ENCODE measurements at regions of chr2 and their contacts with region 1.

Region 1: DNA sequence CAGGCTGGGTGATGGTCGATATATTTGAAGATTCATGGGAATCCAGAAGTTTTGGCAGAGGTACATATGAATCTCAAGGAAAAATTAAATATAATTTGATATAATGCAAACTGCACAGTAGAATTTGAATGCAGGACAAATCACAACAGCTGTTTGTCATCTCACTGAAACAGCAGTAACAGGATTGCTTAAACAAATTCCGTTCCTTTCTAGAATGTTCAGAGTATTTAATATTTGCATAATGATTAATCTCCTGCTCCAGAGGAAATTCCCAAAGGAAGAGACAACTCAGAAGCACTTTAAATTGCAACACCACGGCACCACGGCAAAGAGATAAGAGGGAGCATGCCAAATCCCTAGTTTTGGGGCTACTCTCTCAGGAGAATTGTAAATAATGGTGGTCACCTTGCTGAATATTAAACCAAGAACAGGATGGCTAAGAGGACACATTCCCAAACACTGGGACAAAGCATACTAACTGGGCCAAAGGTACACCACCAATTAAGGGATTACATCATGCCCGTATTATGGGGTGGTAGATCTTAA is 67.8 kb upstream of the MAP4K3 start:
- DNase-seq: no peak
- ATAC-seq: peak; percentile 31 to 58 (median 54)
- H3K4me3 ChIP-seq: peak overlapping the region in 3 of 12 donors; percentile 1 to 13 (median 1)
- H3K27ac ChIP-seq: peak overlapping the region; percentile 31 to 84 (median 72)
- H3K4me1 ChIP-seq: peaks cover 2 to 73% (median 41%) of the 10 kb centered on the region in 12 donors
- H3K27me3 ChIP-seq: no peaks in the 10 kb centered on the region
- CTCF ChIP-seq: no peak
- POLR2A ChIP-seq: no peak

Region 2: GRCh38 chr2:39443009-39443408 is 61.9 kb before region 1 on chr2:
- intact Hi-C with region 1: loop called in 6 of 10 experiments (anchors 5 kb)
- DNase-seq: no peak
- ATAC-seq: no peak
- H3K4me3 ChIP-seq: no peak overlapping the region
- H3K27ac ChIP-seq: no peak overlapping the region
- H3K4me1 ChIP-seq: peaks cover 0 to 23% (median 18%) of the 10 kb centered on the region in 12 donors
- H3K27me3 ChIP-seq: no peaks in the 10 kb centered on the region
- CTCF ChIP-seq: no peak
- POLR2A ChIP-seq: no peak

Region 3: DNA sequence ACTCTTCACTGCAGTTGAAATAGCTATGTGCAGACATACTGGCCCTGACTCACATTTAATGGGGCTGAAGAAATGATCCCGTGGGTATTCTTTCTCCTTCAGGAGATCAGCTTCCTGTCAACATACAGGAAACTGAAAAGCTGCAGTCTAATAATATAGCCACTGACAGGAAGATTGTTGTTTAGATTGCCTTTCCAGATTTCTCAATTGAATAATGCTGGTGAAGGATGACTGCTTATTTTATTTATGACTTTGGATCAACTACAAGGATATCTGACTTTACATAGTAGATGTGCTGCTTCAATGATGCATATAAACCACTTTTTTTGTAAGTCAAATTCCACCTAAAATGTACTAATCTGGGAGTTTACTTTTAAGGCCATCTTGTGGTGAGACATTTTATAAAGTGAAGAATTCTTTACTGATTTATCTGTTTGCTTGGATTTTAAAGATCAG is 25.6 kb after region 1 on chr2:
- intact Hi-C with region 1: no loop called
- DNase-seq: no peak
- ATAC-seq: peak in 2 of 4 donors; percentile 36 to 68
- H3K4me3 ChIP-seq: no peak overlapping the region
- H3K27ac ChIP-seq: peak overlapping the region in 5 of 12 donors; percentile 4 to 47 (median 34)
- H3K4me1 ChIP-seq: peaks cover 4 to 34% (median 18%) of the 10 kb centered on the region in 12 donors
- H3K27me3 ChIP-seq: no peaks in the 10 kb centered on the region
- CTCF ChIP-seq: peak in 1 of 12 donors; percentile 18
- POLR2A ChIP-seq: no peak

Region 4: GRCh38 chr2:39547811-39548719 is 43.2 kb after region 1 on chr2:
- intact Hi-C with region 1: no loop called
- DNase-seq: no peak
- ATAC-seq: no peak
- H3K4me3 ChIP-seq: no peak overlapping the region
- H3K27ac ChIP-seq: no peak overlapping the region
- H3K4me1 ChIP-seq: peaks cover 0 to 12% (median 6%) of the 10 kb centered on the region in 12 donors
- H3K27me3 ChIP-seq: no peaks in the 10 kb centered on the region
- CTCF ChIP-seq: no peak
- POLR2A ChIP-seq: no peak

Region 5: GRCh38 chr2:39719317-39719716 is 214.5 kb after region 1 on chr2:
- intact Hi-C with region 1: no loop called
- DNase-seq: no peak
- ATAC-seq: no peak
- H3K4me3 ChIP-seq: no peak overlapping the region
- H3K27ac ChIP-seq: no peak overlapping the region
- H3K4me1 ChIP-seq: peaks cover 0 to 19% (median 0%) of the 10 kb centered on the region in 12 donors
- H3K27me3 ChIP-seq: no peaks in the 10 kb centered on the region
- CTCF ChIP-seq: no peak
- POLR2A ChIP-seq: no peak